Cardiac septum (tissue), 1 donor: ENCODE measurements at regions of chr10 and their contacts with region 1.

Region 1: DNA sequence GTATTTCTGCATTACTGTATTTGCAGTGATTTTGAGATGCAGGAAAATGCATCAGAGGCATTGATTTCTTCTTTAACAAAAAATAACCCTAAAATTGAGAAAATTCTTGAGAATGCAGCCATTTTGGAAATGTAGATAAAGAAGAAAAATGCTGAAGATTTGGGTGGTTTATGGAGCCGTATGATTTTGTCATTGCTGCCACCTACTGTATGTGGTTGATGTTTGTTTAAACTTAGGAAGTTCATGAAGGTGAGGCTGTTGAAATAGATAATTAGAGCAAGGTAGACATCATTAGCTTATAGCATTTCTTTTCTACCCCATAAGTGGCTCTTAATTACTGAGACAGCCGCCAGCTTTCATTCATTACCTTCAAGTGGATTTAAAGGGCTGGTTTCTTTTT is 92.1 kb upstream of the SAMD8 start:
- DNase-seq: no peak

Region 2: GRCh38 chr10:74262856-74263255 is 756.5 kb before region 1 on chr10:
- intact Hi-C with region 1: loop called (anchors 5 kb)
- DNase-seq: no peak

Region 3: DNA sequence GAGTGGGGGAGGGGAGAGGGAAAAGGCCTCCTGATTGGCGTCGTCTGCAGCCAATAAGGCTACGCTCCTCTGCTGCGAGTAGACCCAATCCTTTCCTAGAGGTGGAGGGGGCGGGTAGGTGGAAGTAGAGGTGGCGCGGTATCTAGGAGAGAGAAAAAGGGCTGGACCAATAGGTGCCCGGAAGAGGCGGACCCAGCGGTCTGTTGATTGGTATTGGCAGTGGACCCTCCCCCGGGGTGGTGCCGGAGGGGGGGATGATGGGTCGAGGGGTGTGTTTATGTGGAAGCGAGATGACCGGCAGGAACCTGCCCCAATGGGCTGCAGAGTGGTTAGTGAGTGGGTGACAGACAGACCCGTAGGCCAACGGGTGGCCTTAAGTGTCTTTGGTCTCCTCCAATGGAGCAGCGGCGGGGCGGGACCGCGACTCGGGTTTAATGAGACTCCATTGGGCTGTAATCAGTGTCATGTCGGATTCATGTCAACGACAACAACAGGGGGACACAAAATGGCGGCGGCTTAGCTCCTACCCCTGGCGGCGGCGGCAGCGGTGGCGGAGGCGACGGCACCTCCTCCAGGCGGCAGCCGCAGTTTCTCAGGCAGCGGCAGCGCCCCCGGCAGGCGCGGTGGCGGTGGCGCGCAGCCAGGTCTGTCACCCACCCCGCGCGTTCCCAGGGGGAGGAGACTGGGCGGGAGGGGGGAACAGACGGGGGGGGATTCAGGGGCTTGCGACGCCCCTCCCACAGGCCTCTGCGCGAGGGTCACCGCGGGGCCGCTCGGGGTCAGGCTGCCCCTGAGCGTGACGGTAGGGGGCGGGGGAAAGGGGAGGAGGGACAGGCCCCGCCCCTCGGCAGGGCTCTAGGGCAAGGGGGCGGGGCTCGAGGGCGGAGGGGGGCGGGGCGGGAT is 193.0 kb before region 1 on chr10 and contains the start of gene KAT6B:
- intact Hi-C with region 1: loop called (anchors 5 kb)
- DNase-seq: peak; percentile 100
- total RNA-seq, gene KAT6B: 47.5 TPM

Region 4: GRCh38 chr10:74932648-74933047 is 86.7 kb before region 1 on chr10:
- intact Hi-C with region 1: no loop called
- DNase-seq: peak; percentile 82